ENCODE measurements at regions of chr9 and their contacts with region 1.

Region 1: GRCh38 chr9:137295238-137295811 is 6.7 kb downstream of the NRARP start:
- H3K4me3 Mint-ChIP-seq: peak overlapping the region; percentile 6
- H3K27ac Mint-ChIP-seq: peak overlapping the region; percentile 32
- H3K4me1 Mint-ChIP-seq: peaks cover 11% of the 10 kb centered on the region
- H3K27me3 Mint-ChIP-seq: peaks cover 71% of the 10 kb centered on the region

Region 2: DNA sequence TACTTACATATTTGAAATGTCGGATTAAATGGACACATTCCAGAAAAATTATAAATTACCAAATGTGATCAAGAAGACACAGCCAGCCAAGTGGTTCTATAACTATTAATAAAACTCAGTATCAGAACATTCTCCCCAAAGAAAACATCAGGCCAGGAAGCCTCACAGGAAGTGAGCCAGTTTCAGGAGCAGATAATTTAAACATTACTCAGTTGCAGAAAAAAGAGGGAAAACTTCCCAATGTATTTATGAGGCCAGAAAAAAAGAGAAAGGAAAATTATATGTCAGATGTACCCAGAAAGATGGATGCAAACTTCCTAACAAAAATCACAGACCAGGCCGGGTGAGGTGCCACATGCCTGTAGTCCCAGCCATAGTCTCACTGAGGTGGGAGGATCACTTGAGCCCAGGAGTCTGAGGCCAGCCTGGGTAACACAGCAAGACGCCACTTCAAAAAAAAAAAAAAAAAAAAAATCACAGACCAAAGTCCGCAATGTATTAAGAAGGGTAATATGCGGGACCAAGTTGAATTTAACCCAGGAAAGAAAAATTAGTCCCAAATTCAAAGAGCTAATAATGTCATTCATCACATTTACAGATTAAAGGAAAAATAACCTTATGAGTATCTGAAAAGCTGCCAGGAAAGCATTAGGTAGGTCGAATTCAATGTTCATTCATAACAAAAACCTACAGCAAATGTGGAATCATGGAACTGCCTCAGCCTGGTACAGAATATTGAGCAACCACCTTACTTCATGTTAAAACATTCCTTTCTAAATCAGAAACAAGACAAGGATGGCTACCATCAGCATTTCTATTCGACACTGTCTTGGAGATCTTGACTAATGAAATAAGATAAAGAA is 44.0 kb after region 1 on chr9:
- intact Hi-C with region 1: no loop called
- H3K4me3 Mint-ChIP-seq: no peak overlapping the region
- H3K27ac Mint-ChIP-seq: no peak overlapping the region
- H3K4me1 Mint-ChIP-seq: no peaks in the 10 kb centered on the region
- H3K27me3 Mint-ChIP-seq: peaks cover 16% of the 10 kb centered on the region

Region 3: GRCh38 chr9:137353223-137354152 is 58.2 kb after region 1 on chr9:
- intact Hi-C with region 1: no loop called
- H3K4me3 Mint-ChIP-seq: no peak overlapping the region
- H3K27ac Mint-ChIP-seq: no peak overlapping the region
- H3K4me1 Mint-ChIP-seq: no peaks in the 10 kb centered on the region
- H3K27me3 Mint-ChIP-seq: no peaks in the 10 kb centered on the region

Region 4: DNA sequence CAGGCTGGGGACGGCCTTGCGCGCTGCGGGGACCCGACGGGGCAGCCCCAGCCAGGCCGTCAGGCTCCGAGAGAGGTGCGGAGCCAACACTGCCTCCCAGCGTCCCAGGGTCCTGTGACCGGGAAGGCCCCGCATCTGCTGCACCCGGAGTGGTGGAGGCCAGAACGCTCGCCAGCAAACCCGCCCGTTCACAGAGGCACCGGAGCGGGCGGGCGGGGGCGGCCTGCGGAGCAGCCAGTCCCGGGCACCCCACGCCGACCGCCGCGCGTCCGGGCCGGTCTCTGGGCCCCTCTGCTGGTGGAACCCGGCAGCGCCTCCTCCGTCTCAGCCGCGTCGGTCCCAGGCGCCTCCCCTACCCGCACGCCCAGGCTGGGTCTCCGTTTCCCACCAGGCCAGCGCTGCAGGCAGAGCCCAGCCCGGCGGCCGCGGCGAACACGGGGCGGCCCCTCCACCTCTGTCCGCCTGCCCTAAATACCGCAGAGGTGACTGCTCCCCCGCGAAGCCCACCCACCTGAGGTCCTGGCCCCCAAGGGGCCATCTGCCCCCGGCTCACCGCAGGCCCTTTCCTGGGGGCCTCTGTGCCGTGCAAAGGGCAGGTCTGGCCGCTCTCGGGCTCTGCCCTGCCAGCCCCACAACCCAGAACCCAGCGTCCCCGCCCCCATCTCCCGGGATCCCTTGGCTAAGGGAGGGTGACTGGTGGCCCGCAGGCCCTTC is 111.7 kb after region 1 on chr9:
- intact Hi-C with region 1: loop called (anchors 2 kb)
- H3K4me3 Mint-ChIP-seq: peak overlapping the region; percentile 37
- H3K27ac Mint-ChIP-seq: peak overlapping the region; percentile 25
- H3K4me1 Mint-ChIP-seq: peaks cover 28% of the 10 kb centered on the region
- H3K27me3 Mint-ChIP-seq: peaks cover 61% of the 10 kb centered on the region

Region 5: DNA sequence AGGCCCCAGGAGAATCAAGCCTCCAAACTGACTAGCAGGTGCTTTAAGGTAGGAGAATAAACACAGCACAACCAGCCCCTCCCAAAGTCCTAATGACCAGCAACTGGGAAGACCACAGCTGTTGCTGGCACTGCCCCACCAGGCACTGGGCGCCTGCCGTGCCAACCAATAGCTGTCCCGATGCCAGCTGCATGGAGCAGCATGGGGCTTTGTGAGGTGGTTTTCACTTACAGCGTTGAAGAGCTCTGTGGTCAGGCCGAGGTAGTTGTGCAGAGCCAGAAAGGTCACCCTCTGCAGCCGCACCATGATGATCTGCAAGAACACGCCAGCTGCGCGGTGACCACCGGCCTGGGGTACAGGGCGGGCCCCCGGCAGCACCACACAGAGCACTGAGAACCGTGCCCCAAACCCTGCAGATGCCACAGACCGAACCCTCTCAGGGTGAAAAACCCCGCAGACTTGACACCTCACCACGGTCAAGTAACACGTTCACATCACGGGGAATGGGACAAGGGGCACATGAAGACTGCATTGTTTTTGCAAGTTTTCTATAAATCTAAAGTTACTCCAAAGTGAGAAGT is 226.2 kb after region 1 on chr9:
- intact Hi-C with region 1: loop called (anchors 10 kb)
- H3K4me3 Mint-ChIP-seq: no peak overlapping the region
- H3K27ac Mint-ChIP-seq: no peak overlapping the region
- H3K4me1 Mint-ChIP-seq: peaks cover 4% of the 10 kb centered on the region
- H3K27me3 Mint-ChIP-seq: peaks cover 6% of the 10 kb centered on the region

Region 6: DNA sequence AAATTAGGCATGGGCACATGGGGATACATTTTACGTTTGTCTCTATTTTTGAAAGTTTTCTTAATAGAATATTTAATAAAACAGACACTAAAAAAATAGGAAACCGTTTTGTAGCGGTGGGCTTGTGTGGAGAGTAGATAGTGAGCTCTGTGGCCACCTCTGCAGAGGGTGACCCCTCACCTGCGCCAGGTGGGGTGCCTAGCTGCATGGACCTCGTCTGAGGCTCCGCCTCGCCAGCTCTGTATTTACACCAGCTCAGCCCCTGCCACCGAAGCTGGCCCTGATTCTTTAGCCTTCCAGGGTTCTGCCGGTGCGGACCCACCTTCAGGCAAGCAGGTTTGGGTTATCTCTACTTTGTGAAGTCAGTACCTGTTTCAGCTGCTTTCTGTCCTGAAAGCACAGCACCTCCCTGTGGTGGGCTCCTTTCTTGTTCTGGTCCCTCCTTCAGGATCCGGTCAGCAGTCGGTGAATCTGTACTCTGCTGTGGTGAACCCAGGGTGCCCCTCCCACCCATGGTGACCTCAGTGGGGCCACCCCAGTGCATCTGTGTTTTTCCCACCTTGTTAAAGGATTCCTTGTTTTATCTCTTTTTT is 477.1 kb after region 1 on chr9:
- intact Hi-C with region 1: no loop called
- H3K4me3 Mint-ChIP-seq: no peak overlapping the region
- H3K27ac Mint-ChIP-seq: no peak overlapping the region
- H3K4me1 Mint-ChIP-seq: no peaks in the 10 kb centered on the region
- H3K27me3 Mint-ChIP-seq: no peaks in the 10 kb centered on the region